ENCODE measurements at regions of chr1 and their contacts with region 1.

Region 1: DNA sequence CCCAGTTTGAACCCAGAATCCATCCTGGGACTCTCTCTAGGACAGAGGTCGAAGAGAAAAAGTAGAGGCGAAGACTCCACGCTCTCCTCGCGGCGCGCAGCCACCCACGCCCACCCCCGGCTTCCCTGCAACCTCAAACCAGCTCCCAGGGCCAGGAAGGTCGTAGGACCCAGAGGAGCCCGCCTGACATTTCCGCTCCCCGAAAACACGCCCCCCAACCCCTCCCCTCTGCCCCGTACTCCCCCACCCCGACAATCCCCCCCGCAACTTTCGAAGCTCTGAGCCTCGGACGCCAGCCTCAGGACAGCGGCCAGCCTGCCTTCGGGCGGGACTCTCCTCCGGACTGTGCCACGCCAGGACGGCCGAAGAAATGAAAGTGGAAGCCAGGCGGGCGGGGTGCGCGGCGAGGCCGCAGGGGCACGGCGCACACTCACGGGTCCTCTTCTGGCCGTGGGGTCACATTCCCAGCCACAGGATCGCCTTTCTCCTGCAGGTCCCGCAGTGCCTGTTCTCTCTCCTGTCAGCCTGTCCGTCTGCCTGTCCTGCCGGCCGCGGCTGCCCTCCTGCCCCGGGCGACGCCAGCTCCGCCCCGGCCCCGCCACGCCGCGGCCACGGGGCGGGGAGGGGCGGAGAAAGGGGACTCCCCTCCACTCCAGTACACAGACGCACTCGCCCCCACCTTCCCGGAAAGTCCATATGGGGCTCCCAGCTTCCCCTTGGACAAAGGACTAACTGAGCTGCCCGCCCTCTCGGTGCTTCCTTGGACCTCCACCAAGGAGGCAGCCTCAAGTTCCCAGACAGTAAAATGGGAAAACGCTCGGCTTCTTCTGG is at the start of gene MOB3C:
- DNase-seq: peak; percentile 81 to 90
- ATAC-seq: peak; percentile 60 to 65
- H3K4me3 ChIP-seq: peak within 1 kb of the TSS; percentile 77 to 89 (median 82)
- H3K27ac ChIP-seq: peak within 1 kb of the TSS; percentile 95 to 98 (median 96)
- H3K4me1 ChIP-seq: peaks cover 47 to 52% of the 10 kb centered on the region in 2 donors
- H3K27me3 ChIP-seq: no peaks in the 10 kb centered on the region
- CTCF ChIP-seq: no peak
- POLR2A ChIP-seq: peak; percentile 89 to 96
- total RNA-seq, gene MOB3C: 11.3 to 26.5 (median 23.3) TPM

Region 2: DNA sequence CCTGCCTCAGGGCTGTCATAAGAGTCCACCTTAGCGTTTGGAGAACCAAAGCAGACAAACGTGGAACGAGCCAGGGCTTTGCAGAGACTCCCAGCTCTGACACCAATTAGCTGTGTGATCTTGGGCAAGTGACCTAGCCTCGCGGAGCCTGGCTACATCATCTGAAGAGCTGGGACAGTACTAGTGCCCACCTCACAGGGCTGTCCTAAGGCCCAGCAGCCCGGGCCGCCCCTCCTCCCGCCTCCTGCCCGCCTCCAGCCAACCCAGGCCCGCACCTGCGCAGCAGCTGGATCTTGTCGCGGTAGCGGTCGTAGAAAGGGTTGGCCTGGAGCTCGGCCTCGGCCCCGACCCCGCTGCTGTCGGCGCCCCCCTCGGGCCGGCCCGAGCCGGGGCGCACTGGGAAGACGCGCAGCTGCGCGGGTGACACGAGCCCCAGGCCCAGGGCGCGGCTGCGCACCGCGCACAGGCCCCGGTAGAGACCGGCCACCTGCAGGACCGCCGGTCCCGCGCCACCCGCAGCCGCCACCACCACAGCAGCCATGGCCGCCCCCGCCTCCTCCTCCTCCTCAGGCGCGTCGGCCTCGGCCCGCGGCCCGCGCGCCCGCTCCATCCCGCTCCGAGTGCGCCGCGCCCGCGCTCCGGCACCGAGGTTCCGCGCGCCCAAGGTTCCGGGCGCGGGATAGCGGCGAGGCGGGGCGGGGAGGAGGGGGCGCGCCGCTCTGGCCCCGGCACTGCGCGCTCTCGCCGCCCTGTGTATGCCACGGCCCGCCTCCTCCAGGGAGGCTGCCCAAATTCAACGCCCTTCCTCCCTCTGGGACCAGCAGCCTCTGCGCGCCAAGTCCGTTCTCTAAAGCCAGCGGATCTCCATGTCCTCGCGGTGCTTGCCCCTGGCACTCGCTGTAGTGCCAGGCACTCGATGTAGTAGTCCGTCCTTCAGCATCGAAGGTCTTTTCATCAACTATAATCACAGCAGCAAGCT is 51.6 kb after region 1 on chr1 and contains the start of gene ATPAF1:
- in situ Hi-C with region 1: no loop called
- intact Hi-C with region 1: loop called (anchors 2 kb)
- DNase-seq: peak; percentile 28 to 83
- ATAC-seq: peak; percentile 84 to 87
- H3K4me3 ChIP-seq: peak within 1 kb of the TSS; percentile 79 to 91 (median 90)
- H3K27ac ChIP-seq: peak within 1 kb of the TSS; percentile 72 to 91 (median 83)
- H3K4me1 ChIP-seq: peaks cover 21 to 22% of the 10 kb centered on the region in 2 donors
- H3K27me3 ChIP-seq: no peaks in the 10 kb centered on the region
- CTCF ChIP-seq: peak in 1 of 5 experiments; percentile 12
- POLR2A ChIP-seq: peak; percentile 24 to 52
- total RNA-seq, gene ATPAF1: 76.6 to 173 (median 135) TPM